ENCODE measurements at regions of chr20 and their contacts with region 1.

Region 1: DNA sequence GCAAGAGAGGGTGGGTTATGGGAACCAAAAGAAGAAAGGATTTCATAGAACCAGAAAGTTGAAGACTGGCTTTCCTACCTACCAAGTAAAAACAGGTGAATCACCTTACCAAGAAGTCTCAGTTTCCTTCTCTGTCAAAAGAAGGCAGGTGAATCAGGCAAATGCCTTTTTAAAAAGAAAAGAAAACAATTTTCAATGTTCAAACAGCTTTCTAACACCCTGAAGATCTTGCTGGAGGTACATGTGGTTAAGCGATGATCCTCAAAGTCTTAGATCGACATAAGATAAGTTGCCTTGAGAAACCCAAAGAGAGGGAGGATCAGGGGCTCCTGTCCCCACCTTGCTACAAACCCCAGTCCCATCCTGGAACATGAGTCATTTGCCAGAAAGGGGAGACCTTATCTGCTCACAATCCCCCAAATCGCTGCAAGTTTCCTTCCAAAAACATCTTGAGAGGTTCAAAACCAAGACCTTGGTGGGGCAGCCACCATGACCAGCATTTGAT is 71.6 kb downstream of the NFATC2 start:
- DNase-seq: no peak
- ATAC-seq: no peak
- H3K4me3 ChIP-seq: no peak overlapping the region
- H3K27ac ChIP-seq: no peak overlapping the region
- H3K4me1 ChIP-seq: no peaks in the 10 kb centered on the region
- H3K27me3 ChIP-seq: no peaks in the 10 kb centered on the region
- CTCF ChIP-seq: no peak

Region 2: GRCh38 chr20:51305316-51306052 is 165.5 kb before region 1 on chr20:
- intact Hi-C with region 1: no loop called
- DNase-seq: no peak
- ATAC-seq: no peak
- H3K4me3 ChIP-seq: no peak overlapping the region
- H3K27ac ChIP-seq: no peak overlapping the region
- H3K4me1 ChIP-seq: no peaks in the 10 kb centered on the region
- H3K27me3 ChIP-seq: peaks cover 0 to 1% (median 0%) of the 10 kb centered on the region in 3 donors
- CTCF ChIP-seq: no peak

Region 3: GRCh38 chr20:51440589-51440988 is 30.4 kb before region 1 on chr20:
- intact Hi-C with region 1: loop called in 1 of 2 experiments (anchors 1 kb)
- DNase-seq: no peak
- ATAC-seq: no peak
- H3K4me3 ChIP-seq: no peak overlapping the region
- H3K27ac ChIP-seq: no peak overlapping the region
- H3K4me1 ChIP-seq: no peaks in the 10 kb centered on the region
- H3K27me3 ChIP-seq: no peaks in the 10 kb centered on the region
- CTCF ChIP-seq: no peak